ENCODE measurements at regions of chrX and their contacts with region 1.

Region 1: GRCh38 chrX:68732906-68733493 is 85.5 kb downstream of the STARD8 start:
- DNase-seq: peak; percentile 50 to 60 (median 57)
- H3K4me3 ChIP-seq: no peak overlapping the region
- H3K4me3 Mint-ChIP-seq: no peak overlapping the region
- H3K27ac ChIP-seq: no peak overlapping the region
- H3K27ac Mint-ChIP-seq: peak overlapping the region in 1 of 7 donors; percentile 57
- H3K4me1 ChIP-seq: no peaks in the 10 kb centered on the region
- H3K4me1 Mint-ChIP-seq: peaks cover 0 to 2% (median 0%) of the 10 kb centered on the region in 4 donors
- H3K27me3 ChIP-seq: no peaks in the 10 kb centered on the region
- H3K27me3 Mint-ChIP-seq: peaks cover 4% of the 10 kb centered on the region in 2 donors

Region 2: GRCh38 chrX:67939270-67939669 is 793.7 kb before region 1 on chrX:
- CTCF ChIA-PET with region 1: no interaction called
- POLR2A ChIA-PET with region 1: no interaction called
- intact Hi-C with region 1: no loop called
- DNase-seq: no peak
- H3K4me3 ChIP-seq: no peak overlapping the region
- H3K4me3 Mint-ChIP-seq: no peak overlapping the region
- H3K27ac ChIP-seq: no peak overlapping the region
- H3K27ac Mint-ChIP-seq: no peak overlapping the region
- H3K4me1 ChIP-seq: no peaks in the 10 kb centered on the region
- H3K4me1 Mint-ChIP-seq: no peaks in the 10 kb centered on the region
- H3K27me3 ChIP-seq: no peaks in the 10 kb centered on the region
- H3K27me3 Mint-ChIP-seq: no peaks in the 10 kb centered on the region

Region 3: DNA sequence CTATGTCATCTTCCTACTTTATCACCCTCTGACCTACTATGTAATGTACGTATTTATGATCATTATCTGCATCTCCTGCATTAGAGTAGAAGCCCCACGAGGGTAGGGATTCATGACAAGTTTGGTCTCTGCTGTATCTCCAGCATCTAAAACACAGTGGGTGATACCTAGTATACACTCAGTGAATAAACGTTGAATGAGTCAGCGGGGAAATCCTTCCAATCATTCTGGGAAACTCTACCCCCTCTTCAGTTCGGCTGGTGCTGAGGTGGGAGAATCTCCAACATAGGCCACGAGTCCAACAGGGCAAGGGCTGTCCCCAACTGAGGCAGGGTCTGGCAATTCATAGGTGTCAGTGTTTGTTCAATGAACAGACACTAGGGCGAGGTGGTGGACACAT is 21.4 kb after region 1 on chrX:
- CTCF ChIA-PET with region 1: no interaction called
- POLR2A ChIA-PET with region 1: no interaction called
- intact Hi-C with region 1: no loop called
- DNase-seq: no peak
- H3K4me3 ChIP-seq: no peak overlapping the region
- H3K4me3 Mint-ChIP-seq: no peak overlapping the region
- H3K27ac ChIP-seq: no peak overlapping the region
- H3K27ac Mint-ChIP-seq: no peak overlapping the region
- H3K4me1 ChIP-seq: no peaks in the 10 kb centered on the region
- H3K4me1 Mint-ChIP-seq: no peaks in the 10 kb centered on the region
- H3K27me3 ChIP-seq: no peaks in the 10 kb centered on the region
- H3K27me3 Mint-ChIP-seq: peaks cover 0 to 1% of the 10 kb centered on the region in 2 donors

Region 4: DNA sequence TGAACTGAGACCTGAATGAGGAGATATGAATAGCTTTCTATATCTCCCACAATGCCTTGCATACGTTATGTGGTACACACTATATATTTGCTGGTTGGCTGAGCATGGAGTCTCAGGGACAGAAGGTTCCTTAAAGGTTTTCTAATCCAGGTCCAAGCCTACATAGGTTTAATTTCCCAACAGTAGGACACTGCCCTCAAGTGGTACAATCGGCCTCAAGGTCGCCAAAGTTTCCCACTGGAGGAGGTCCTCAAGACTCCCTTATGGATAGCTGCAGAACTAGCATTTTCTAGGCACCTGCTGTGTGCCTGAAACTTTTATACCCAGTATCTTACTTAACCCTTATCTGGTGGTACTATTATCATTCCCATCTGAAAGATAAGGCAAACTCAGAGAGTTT is 74.8 kb after region 1 on chrX:
- CTCF ChIA-PET with region 1: interaction called, 5 read pairs
- POLR2A ChIA-PET with region 1: no interaction called
- intact Hi-C with region 1: loop called (anchors 5 kb)
- DNase-seq: no peak
- H3K4me3 ChIP-seq: no peak overlapping the region
- H3K4me3 Mint-ChIP-seq: no peak overlapping the region
- H3K27ac ChIP-seq: no peak overlapping the region
- H3K27ac Mint-ChIP-seq: no peak overlapping the region
- H3K4me1 ChIP-seq: no peaks in the 10 kb centered on the region
- H3K4me1 Mint-ChIP-seq: no peaks in the 10 kb centered on the region
- H3K27me3 ChIP-seq: no peaks in the 10 kb centered on the region
- H3K27me3 Mint-ChIP-seq: peaks cover 0 to 8% of the 10 kb centered on the region in 2 donors

Region 5: GRCh38 chrX:69060631-69061408 is 327.8 kb after region 1 on chrX:
- CTCF ChIA-PET with region 1: no interaction called
- POLR2A ChIA-PET with region 1: no interaction called
- intact Hi-C with region 1: no loop called
- DNase-seq: no peak
- H3K4me3 ChIP-seq: no peak overlapping the region
- H3K4me3 Mint-ChIP-seq: no peak overlapping the region
- H3K27ac ChIP-seq: no peak overlapping the region
- H3K27ac Mint-ChIP-seq: no peak overlapping the region
- H3K4me1 ChIP-seq: no peaks in the 10 kb centered on the region
- H3K4me1 Mint-ChIP-seq: no peaks in the 10 kb centered on the region
- H3K27me3 ChIP-seq: no peaks in the 10 kb centered on the region
- H3K27me3 Mint-ChIP-seq: no peaks in the 10 kb centered on the region

Measured in CD4-positive, alpha-beta memory T cell (primary cell).